PC-3 (cell line): ENCODE measurements at regions of chr1 and their contacts with region 1.

Region 1: DNA sequence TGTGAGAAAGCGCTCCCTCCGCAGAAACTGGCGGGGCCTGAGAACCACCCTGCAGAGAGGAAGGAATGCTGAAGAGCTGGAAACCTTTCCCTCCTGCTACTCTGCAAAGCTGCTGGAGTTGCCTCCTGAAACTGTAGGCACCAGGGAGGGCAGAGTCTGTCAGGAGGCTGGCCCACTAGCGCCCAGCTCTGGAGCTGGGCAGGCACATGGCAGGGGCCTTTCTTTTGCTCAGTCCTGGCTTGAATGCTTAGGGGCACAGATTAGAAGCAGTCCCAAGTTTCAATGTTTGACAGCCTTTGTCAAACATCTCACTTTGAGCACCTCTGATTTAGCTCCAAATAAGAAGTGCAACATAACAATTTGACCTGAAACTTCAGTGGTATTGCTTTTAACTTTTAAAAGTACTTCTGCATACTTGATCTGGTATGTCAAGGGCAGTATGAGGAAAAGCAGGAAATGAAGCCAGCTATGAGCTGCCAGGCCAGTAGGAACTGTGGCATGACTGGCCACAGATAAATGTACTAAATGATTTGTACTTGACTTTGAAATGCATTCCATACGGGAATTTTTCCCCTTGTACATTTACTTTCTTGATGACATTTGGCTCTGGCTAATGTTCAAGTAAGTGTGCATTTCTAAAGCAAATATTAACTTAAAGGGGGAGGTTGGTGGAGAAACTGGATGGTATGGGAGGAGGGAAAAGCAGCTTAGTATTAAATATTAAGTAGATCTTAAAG is 7.2 kb downstream of the C1orf116 start:
- DNase-seq: peak; percentile 99
- ATAC-seq: peak; percentile 18
- H3K4me3 ChIP-seq: peak overlapping the region; percentile 2; the same call in 1 of the 2 replicates
- H3K27ac ChIP-seq: peak overlapping the region; percentile 95
- H3K4me1 ChIP-seq: peaks cover 98% of the 10 kb centered on the region
- H3K27me3 ChIP-seq: no peaks in the 10 kb centered on the region
- CTCF ChIP-seq: 0 out of 2 replicates have a peak, but pooled peaks have one; percentile 11

Region 2: GRCh38 chr1:206658264-206658980 is 366.9 kb before region 1 on chr1:
- CTCF ChIA-PET with region 1: no interaction called
- POLR2A ChIA-PET with region 1: no interaction called
- intact Hi-C with region 1: no loop called
- DNase-seq: no peak
- ATAC-seq: no peak
- H3K4me3 ChIP-seq: no peak overlapping the region
- H3K27ac ChIP-seq: no peak overlapping the region
- H3K4me1 ChIP-seq: no peaks in the 10 kb centered on the region
- H3K27me3 ChIP-seq: peaks cover 11% of the 10 kb centered on the region; the same call in 1 of the 2 replicates
- CTCF ChIP-seq: peak; percentile 95

Region 3: GRCh38 chr1:207004981-207005830 is 20.1 kb before region 1 on chr1:
- CTCF ChIA-PET with region 1: interaction called, 9 read pairs
- POLR2A ChIA-PET with region 1: interaction called, 52 read pairs
- intact Hi-C with region 1: loop called (anchors 1 kb)
- DNase-seq: peak; percentile 97
- ATAC-seq: peak; percentile 33
- H3K4me3 ChIP-seq: no peak overlapping the region
- H3K27ac ChIP-seq: peak overlapping the region; percentile 92
- H3K4me1 ChIP-seq: peaks cover 82% of the 10 kb centered on the region
- H3K27me3 ChIP-seq: no peaks in the 10 kb centered on the region
- CTCF ChIP-seq: peak; percentile 98

Region 4: GRCh38 chr1:207309775-207310273 is 284.5 kb after region 1 on chr1:
- CTCF ChIA-PET with region 1: no interaction called
- POLR2A ChIA-PET with region 1: interaction called, 3 read pairs
- intact Hi-C with region 1: loop called (anchors 10 kb)
- DNase-seq: peak; percentile 93
- ATAC-seq: peak; percentile 74
- H3K4me3 ChIP-seq: peak overlapping the region; percentile 19
- H3K27ac ChIP-seq: peak overlapping the region; percentile 59
- H3K4me1 ChIP-seq: peaks cover 49% of the 10 kb centered on the region
- H3K27me3 ChIP-seq: no peaks in the 10 kb centered on the region
- CTCF ChIP-seq: no peak